HEK293 (cell line): ENCODE measurements at regions of chr19 and their contacts with region 1.

Region 1: DNA sequence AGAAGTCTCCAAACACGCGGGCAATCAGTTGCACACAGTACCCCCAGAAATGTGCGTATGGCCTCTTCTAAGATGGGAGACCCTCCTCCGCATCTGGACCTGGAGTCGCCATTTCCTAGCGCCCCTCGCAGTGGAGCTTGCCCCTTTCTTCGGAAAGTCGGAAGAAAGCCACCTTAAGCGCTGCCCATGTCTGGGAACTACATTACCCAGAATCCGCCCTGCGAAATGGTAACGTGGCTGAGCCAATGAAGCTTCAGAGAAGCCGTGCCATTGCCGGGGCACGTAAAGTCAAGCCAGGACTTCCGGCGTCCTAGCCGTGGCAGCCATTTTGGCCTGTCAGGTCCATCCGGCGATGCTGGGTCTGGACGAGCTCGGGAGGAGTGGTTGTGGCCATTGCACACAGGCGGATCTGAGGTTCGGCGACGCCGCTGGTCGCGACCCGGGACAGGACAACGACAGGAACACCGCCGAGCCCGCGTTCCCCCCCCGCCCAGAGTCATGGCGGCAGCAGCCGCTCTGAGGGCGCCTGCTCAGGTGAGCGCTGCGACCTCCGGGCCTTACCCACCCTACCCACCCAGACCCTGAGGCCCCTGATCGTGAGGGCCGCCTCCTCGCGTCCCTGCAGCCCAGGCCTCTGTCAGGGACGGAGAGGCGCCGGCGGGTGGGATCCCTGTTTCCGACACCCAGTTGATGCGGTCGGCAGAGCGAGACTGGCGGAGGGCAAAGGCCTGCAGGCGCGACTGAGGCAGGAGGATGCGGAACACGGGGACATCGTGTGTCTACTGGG is at the start of gene ZNF586:
- H3K4me3 ChIP-seq: peak within 1 kb of the TSS; percentile 63
- H3K27ac ChIP-seq: peak within 1 kb of the TSS; percentile 60; the same call in 1 of the 2 replicates
- H3K4me1 ChIP-seq: no peaks in the 10 kb centered on the region
- CTCF ChIP-seq: no peak

Region 2: GRCh38 chr19:57759096-57759495 is 10.4 kb before region 1 on chr19:
- CTCF ChIA-PET with region 1: no interaction called
- POLR2A ChIA-PET with region 1: interaction called, 11 read pairs
- H3K4me3 ChIP-seq: no peak overlapping the region
- H3K27ac ChIP-seq: no peak overlapping the region
- H3K4me1 ChIP-seq: no peaks in the 10 kb centered on the region
- CTCF ChIP-seq: no peak

Region 3: DNA sequence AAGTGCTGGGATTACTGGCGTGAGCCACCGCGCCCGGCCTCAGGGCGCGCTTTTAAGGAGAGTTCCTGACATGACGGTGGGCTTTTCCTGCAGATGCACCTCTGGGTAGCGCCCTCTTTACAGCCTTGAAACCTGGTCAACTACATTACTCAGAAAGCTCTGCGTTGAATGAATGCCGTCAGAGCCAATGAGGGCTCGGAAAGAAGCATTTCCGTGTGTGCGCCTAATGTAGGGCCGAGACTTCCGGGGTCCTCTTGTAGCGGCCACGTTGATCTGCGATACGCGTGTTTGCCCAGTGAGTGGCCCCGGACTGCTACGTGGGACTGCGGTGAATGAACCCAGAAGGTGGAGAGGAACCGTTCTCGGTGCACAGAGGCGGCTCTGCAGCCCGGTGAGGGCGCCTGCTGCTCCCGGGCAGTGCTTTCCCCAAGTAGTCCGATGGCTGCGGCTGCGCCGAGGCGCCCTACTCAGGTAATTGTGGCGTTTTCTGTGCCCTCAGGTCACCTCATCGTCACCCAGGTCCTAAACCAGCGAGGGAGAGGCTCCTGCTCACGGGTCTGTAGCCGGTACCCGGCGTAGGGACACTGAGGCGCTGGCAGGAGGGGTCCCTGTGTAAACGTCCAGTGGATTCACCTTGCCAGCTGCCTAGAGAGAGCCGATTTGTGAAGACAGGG is 50.1 kb after region 1 on chr19:
- CTCF ChIA-PET with region 1: no interaction called
- POLR2A ChIA-PET with region 1: interaction called, 11 read pairs
- H3K4me3 ChIP-seq: peak overlapping the region; percentile 97
- H3K27ac ChIP-seq: peak overlapping the region; percentile 83
- H3K4me1 ChIP-seq: peaks cover 2% of the 10 kb centered on the region; the same call in 1 of the 2 replicates
- CTCF ChIP-seq: peak; percentile 76